ENCODE measurements at regions of chr4 and their contacts with region 1.

Region 1: DNA sequence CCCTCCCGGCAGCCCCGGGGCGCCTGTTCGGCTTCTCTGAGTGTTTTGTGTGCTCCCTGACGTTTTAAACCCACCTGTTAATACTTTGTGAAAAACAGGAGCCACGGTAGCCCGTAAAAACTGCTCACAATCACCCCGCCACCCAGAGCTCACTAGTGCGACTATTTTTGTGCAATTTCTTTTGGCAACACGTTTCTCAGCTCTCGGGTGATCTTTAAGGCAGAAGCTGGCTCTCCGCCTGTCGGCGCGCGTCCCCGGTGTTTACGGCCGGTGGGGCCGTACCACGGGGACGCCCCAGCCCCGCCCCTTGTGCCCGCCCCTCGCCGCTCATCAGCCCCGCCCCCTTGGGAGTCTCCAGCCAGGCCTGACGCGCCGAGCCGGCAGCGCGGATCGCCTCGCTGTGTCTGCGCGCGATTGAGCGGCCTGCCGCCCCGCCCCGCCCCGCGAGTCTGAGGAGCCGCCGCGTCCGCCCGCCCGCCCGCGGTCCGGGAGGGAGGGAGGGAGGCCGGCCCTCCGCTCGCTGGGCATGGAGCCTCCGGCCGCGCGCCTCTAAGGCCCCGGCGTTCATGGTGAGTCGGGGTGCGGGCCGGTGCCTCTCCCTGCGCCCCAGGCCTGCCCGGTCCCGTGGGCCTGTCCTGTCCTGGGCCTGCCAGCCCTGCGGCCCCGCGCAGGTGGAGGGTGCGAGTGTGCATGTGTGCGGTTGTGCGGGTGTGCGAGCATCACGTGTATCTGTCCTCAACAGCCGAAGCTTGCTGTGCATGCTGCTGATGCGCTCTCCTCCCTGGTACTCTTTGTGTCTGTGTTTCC is 56.2 kb upstream of the TADA2B start:
- DNase-seq: peak; percentile 95
- H3K4me3 ChIP-seq: peak overlapping the region; percentile 88
- H3K27ac ChIP-seq: peak overlapping the region; percentile 75
- H3K4me1 ChIP-seq: peaks cover 12% of the 10 kb centered on the region
- H3K27me3 ChIP-seq: no peaks in the 10 kb centered on the region
- CTCF ChIP-seq: no peak

Region 2: GRCh38 chr4:6840062-6840976 is 146.7 kb before region 1 on chr4:
- CTCF ChIA-PET with region 1: no interaction called
- POLR2A ChIA-PET with region 1: no interaction called
- intact Hi-C with region 1: no loop called
- DNase-seq: no peak
- H3K4me3 ChIP-seq: no peak overlapping the region
- H3K27ac ChIP-seq: peak overlapping the region; percentile 6
- H3K4me1 ChIP-seq: peaks cover 9% of the 10 kb centered on the region
- H3K27me3 ChIP-seq: no peaks in the 10 kb centered on the region
- CTCF ChIP-seq: no peak

Region 3: GRCh38 chr4:6909073-6909965 is 77.7 kb before region 1 on chr4 and contains the start of gene TBC1D14:
- CTCF ChIA-PET with region 1: no interaction called
- POLR2A ChIA-PET with region 1: no interaction called
- intact Hi-C with region 1: loop called (anchors 1 kb)
- DNase-seq: peak; percentile 92
- H3K4me3 ChIP-seq: peak within 1 kb of the TSS; percentile 89
- H3K27ac ChIP-seq: peak within 1 kb of the TSS; percentile 99
- H3K4me1 ChIP-seq: peaks cover 9% of the 10 kb centered on the region
- H3K27me3 ChIP-seq: no peaks in the 10 kb centered on the region
- CTCF ChIP-seq: no peak
- total RNA-seq, gene TBC1D14: 44.3 and 46.0 TPM in 2 replicates